Activated CD4-positive, alpha-beta memory T cell treated with anti-CD3 and anti-CD28 coated beads for 36 hours (primary cell): ENCODE measurements at regions of chr14 and their contacts with region 1.

Region 1: GRCh38 chr14:106417224-106418049 is 891.1 kb downstream of the TMEM121 start:
- DNase-seq: peak; percentile 97
- H3K4me3 Mint-ChIP-seq: no peak overlapping the region
- H3K27ac Mint-ChIP-seq: no peak overlapping the region
- H3K4me1 Mint-ChIP-seq: peaks cover 8% of the 10 kb centered on the region
- H3K27me3 Mint-ChIP-seq: peaks cover 4% of the 10 kb centered on the region

Region 2: GRCh38 chr14:106277503-106277902 is 139.9 kb before region 1 on chr14:
- CTCF ChIA-PET with region 1: interaction called, 16 read pairs
- POLR2A ChIA-PET with region 1: no interaction called
- intact Hi-C with region 1: no loop called
- DNase-seq: peak; percentile 40
- H3K4me3 Mint-ChIP-seq: no peak overlapping the region
- H3K27ac Mint-ChIP-seq: no peak overlapping the region
- H3K4me1 Mint-ChIP-seq: peaks cover 9% of the 10 kb centered on the region
- H3K27me3 Mint-ChIP-seq: peaks cover 26% of the 10 kb centered on the region

Region 3: DNA sequence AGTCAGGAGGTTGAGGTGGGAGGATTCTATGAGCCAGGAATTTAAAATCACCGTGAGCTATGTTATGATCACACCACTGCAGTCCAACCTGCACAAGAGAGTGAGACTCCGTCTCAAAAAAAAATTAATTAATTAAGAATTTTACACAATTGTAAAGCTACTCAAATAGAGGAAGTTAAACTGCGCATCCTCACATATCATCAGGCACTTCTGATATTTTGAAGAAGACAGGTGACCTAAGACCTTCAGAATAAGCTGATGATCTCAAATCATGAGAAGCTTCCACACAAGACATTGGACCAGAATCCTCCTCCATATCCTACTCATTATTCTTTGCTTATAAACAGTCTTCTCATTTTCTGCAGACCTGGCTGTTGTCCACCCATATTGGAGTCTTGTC is 90.2 kb before region 1 on chr14:
- CTCF ChIA-PET with region 1: interaction called, 12 read pairs
- POLR2A ChIA-PET with region 1: no interaction called
- intact Hi-C with region 1: no loop called
- DNase-seq: no peak
- H3K4me3 Mint-ChIP-seq: no peak overlapping the region
- H3K27ac Mint-ChIP-seq: no peak overlapping the region
- H3K4me1 Mint-ChIP-seq: no peaks in the 10 kb centered on the region
- H3K27me3 Mint-ChIP-seq: peaks cover 16% of the 10 kb centered on the region

Region 4: GRCh38 chr14:106436310-106436905 is 19.0 kb after region 1 on chr14:
- CTCF ChIA-PET with region 1: interaction called, 83 read pairs
- POLR2A ChIA-PET with region 1: no interaction called
- intact Hi-C with region 1: no loop called
- DNase-seq: peak; percentile 65
- H3K4me3 Mint-ChIP-seq: no peak overlapping the region
- H3K27ac Mint-ChIP-seq: no peak overlapping the region
- H3K4me1 Mint-ChIP-seq: no peaks in the 10 kb centered on the region
- H3K27me3 Mint-ChIP-seq: peaks cover 30% of the 10 kb centered on the region

Region 5: GRCh38 chr14:106491851-106492250 is 74.4 kb after region 1 on chr14:
- CTCF ChIA-PET with region 1: interaction called, 59 read pairs
- POLR2A ChIA-PET with region 1: interaction called, 3 read pairs
- intact Hi-C with region 1: no loop called
- DNase-seq: peak; percentile 50
- H3K4me3 Mint-ChIP-seq: no peak overlapping the region
- H3K27ac Mint-ChIP-seq: no peak overlapping the region
- H3K4me1 Mint-ChIP-seq: peaks cover 21% of the 10 kb centered on the region
- H3K27me3 Mint-ChIP-seq: no peaks in the 10 kb centered on the region

Region 6: GRCh38 chr14:106530423-106531107 is 113.1 kb after region 1 on chr14:
- CTCF ChIA-PET with region 1: interaction called, 68 read pairs
- POLR2A ChIA-PET with region 1: no interaction called
- intact Hi-C with region 1: no loop called
- DNase-seq: peak; percentile 55
- H3K4me3 Mint-ChIP-seq: no peak overlapping the region
- H3K27ac Mint-ChIP-seq: no peak overlapping the region
- H3K4me1 Mint-ChIP-seq: no peaks in the 10 kb centered on the region
- H3K27me3 Mint-ChIP-seq: peaks cover 27% of the 10 kb centered on the region

Region 7: DNA sequence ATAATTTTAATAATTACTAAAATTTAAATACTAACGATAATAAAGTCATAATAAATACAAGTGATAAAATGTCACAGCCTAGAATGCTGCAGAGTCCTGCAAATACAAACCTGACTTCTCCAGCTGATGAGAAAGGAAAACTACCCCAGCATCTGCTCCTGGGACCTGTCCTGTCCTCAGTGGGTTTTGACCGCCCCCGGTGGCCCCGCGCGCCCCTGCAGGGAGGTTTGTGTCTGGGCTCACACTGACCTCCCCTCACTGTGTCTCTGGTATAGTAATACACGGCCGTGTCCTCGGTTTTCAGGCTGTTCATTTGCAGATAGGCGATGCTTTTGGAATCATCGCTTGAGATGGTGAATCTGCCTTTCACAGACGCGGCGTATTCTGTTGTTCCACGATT is 248.4 kb after region 1 on chr14:
- CTCF ChIA-PET with region 1: interaction called, 8 read pairs
- POLR2A ChIA-PET with region 1: no interaction called
- intact Hi-C with region 1: loop called (anchors 10 kb)
- DNase-seq: no peak
- H3K4me3 Mint-ChIP-seq: no peak overlapping the region
- H3K27ac Mint-ChIP-seq: no peak overlapping the region
- H3K4me1 Mint-ChIP-seq: peaks cover 22% of the 10 kb centered on the region
- H3K27me3 Mint-ChIP-seq: peaks cover 11% of the 10 kb centered on the region